ENCODE measurements at regions of chr10 and their contacts with region 1.

Region 1: DNA sequence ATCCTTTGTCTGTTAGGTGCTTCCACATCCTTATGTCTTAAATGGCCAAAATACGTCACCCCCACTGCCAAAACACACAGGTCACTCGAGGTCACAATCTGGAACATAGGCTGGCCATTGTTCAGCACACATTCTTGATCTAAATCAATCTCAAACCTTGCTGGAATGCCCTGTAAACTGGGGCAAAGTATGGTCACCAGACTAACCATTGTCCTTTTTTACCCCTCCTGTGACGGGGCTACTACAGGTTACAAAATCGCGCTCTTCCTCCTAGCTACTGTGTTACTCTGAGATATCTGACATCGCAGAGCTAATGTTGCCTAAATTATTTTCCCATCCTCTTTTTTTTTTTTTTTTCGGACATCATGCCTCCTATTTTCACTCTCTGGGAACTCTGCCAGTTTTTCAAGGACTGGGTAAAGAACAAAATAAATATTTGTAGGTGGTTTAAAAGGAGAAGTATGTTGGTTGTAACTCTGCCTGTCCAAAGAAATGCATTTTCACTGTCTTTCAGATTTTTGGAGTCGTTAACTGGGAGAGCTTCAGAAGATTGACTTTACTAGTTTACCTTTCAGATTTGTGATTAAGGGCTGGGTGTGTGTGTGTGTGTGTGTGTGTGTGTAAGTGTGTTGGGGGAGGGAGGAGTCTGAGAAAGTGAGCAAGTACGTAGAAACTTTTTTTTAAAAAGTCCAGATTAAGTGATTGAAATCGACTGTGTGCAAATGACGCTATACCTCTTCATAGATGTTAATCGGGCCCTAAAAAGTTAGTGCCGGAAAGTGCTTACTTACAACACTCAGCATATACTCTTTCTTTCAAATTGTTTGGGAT is 942 bp upstream of the KIAA1217 start:
- H3K4me3 ChIP-seq: no peak overlapping the region
- H3K27ac ChIP-seq: peak overlapping the region; percentile 61
- H3K4me1 ChIP-seq: peaks cover 15% of the 10 kb centered on the region
- CTCF ChIP-seq: no peak

Region 2: GRCh38 chr10:23965123-23965522 is 242.9 kb before region 1 on chr10:
- CTCF ChIA-PET with region 1: interaction called, 11 read pairs
- POLR2A ChIA-PET with region 1: no interaction called
- H3K4me3 ChIP-seq: no peak overlapping the region
- H3K27ac ChIP-seq: no peak overlapping the region
- H3K4me1 ChIP-seq: no peaks in the 10 kb centered on the region
- CTCF ChIP-seq: no peak

Region 3: DNA sequence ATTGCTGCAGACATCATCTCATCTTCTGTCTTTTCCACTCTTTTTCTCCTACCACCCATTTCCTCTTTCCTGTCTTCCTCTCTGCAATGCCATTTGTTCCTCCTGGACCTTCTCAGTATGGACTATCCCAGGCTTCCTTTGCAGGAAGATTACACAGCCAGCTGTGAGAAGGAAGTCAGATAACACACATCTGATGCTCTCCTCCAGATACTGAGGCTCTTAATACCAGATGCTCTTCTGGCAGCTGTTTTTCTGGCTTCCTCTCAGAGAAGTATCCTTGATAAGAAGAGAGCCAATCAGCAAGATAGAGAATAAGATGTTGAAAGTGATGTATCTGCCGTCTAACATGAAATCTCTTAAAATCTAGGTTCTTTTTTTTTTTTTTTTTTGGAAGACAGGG is 15.3 kb after region 1 on chr10:
- CTCF ChIA-PET with region 1: no interaction called
- POLR2A ChIA-PET with region 1: no interaction called
- H3K4me3 ChIP-seq: no peak overlapping the region
- H3K27ac ChIP-seq: no peak overlapping the region
- H3K4me1 ChIP-seq: no peaks in the 10 kb centered on the region
- CTCF ChIP-seq: no peak

Region 4: GRCh38 chr10:24477915-24478314 is 269.9 kb after region 1 on chr10:
- CTCF ChIA-PET with region 1: no interaction called
- POLR2A ChIA-PET with region 1: no interaction called
- H3K4me3 ChIP-seq: no peak overlapping the region
- H3K27ac ChIP-seq: no peak overlapping the region
- H3K4me1 ChIP-seq: no peaks in the 10 kb centered on the region
- CTCF ChIP-seq: no peak